Psoas muscle (tissue), 8 donors: ENCODE measurements at regions of chr4 and their contacts with region 1.

Region 1: GRCh38 chr4:153142700-153143438 is 61.4 kb upstream of the TRIM2 start:
- DNase-seq: peak; percentile 55 to 71
- ATAC-seq: peak; percentile 78 to 91 (median 84)
- H3K4me3 ChIP-seq: peak overlapping the region; percentile 6
- H3K27ac ChIP-seq: no peak overlapping the region
- H3K4me1 ChIP-seq: no peaks in the 10 kb centered on the region
- H3K27me3 ChIP-seq: no peaks in the 10 kb centered on the region
- CTCF ChIP-seq: peak; percentile 88

Region 2: GRCh38 chr4:153095448-153096204 is 47.2 kb before region 1 on chr4:
- intact Hi-C with region 1: no loop called
- DNase-seq: no peak
- ATAC-seq: peak in 1 of 4 donors; percentile 46
- H3K4me3 ChIP-seq: no peak overlapping the region
- H3K27ac ChIP-seq: no peak overlapping the region
- H3K4me1 ChIP-seq: no peaks in the 10 kb centered on the region
- H3K27me3 ChIP-seq: no peaks in the 10 kb centered on the region
- CTCF ChIP-seq: no peak

Region 3: DNA sequence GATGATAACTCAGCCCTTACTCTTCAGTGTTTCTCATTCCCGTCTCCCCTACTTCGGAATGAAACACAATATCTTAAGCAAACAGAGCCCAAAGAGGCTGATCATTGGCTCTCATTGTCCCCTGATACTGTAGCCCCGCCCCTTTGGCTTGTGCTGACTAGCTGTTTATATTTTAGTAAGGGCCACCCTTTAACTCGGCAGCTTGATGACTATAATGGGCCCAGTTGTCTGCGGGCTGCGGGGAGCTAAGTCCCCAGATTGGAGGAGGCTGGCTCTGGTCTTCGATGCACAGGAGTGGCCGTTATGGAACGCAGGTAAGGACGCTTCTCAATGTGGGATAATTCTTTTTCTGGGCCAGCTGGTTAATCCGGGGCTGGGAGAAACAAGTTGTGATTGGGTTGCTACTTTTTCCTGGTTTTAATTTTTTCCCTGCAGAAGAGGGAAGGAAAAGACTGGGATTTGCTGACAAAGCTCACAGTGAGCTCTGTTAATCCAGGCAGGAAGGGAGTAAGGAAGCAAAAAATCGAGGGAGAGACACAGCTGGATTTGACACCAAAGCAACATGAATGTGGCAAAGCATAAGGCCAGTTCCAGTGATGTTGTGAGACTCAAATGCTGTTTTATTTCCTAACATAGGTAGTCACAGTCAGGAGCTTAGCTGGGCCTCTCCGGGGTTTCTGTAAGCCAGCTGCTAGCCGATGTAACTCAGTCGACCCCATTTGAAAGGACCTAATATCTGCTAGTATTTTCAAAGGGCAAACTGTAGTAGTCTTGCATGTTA is 61.6 kb after region 1 on chr4 and contains the start of gene TRIM2:
- intact Hi-C with region 1: loop called in 1 of 2 experiments (anchors 5 kb)
- DNase-seq: peak; percentile 64 to 70
- ATAC-seq: peak; percentile 36 to 79 (median 65)
- H3K4me3 ChIP-seq: peak within 1 kb of the TSS; percentile 52
- H3K27ac ChIP-seq: no peak within 1 kb of the TSS
- H3K4me1 ChIP-seq: no peaks in the 10 kb centered on the region
- H3K27me3 ChIP-seq: no peaks in the 10 kb centered on the region
- CTCF ChIP-seq: no peak
- total RNA-seq, gene TRIM2: 3.9 to 7.1 (median 5.6) TPM

Region 4: GRCh38 chr4:153318696-153319320 is 175.9 kb after region 1 on chr4:
- intact Hi-C with region 1: loop called (anchors 2 kb)
- DNase-seq: no peak
- ATAC-seq: peak; percentile 57 to 83 (median 69)
- H3K4me3 ChIP-seq: no peak overlapping the region
- H3K27ac ChIP-seq: no peak overlapping the region
- H3K4me1 ChIP-seq: no peaks in the 10 kb centered on the region
- H3K27me3 ChIP-seq: no peaks in the 10 kb centered on the region
- CTCF ChIP-seq: peak; percentile 75

Region 5: DNA sequence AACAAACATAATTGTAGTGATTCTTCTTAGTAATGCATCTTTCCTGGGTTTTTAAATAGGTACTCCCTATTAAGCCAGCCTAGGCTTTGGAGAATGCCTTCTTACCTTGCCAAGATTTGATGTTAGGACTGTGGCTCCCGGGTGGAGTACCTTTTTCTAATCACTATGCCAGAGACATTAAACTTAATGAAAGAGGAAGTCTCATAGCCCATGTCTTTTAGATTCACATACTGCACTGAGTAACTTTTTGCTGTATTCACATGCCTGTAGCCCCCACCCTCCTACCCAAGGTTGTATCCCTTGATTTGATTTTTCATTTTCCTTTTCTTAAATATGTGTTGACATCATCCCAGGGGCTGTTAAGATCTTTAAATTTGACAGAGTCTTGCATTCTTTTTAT is 437.0 kb after region 1 on chr4:
- intact Hi-C with region 1: loop called in 1 of 2 experiments (anchors 5 kb)
- DNase-seq: no peak
- ATAC-seq: no peak
- H3K4me3 ChIP-seq: no peak overlapping the region
- H3K27ac ChIP-seq: no peak overlapping the region
- H3K4me1 ChIP-seq: peaks cover 3% of the 10 kb centered on the region
- H3K27me3 ChIP-seq: no peaks in the 10 kb centered on the region
- CTCF ChIP-seq: no peak

Region 6: GRCh38 chr4:153634738-153635353 is 492.0 kb after region 1 on chr4:
- intact Hi-C with region 1: loop called in 1 of 2 experiments (anchors 10 kb)
- DNase-seq: no peak
- ATAC-seq: peak in 2 of 4 donors; percentile 44 to 50
- H3K4me3 ChIP-seq: no peak overlapping the region
- H3K27ac ChIP-seq: no peak overlapping the region
- H3K4me1 ChIP-seq: no peaks in the 10 kb centered on the region
- H3K27me3 ChIP-seq: no peaks in the 10 kb centered on the region
- CTCF ChIP-seq: peak; percentile 63

Region 7: GRCh38 chr4:153750197-153750817 is 607.4 kb after region 1 on chr4:
- intact Hi-C with region 1: loop called in 1 of 2 experiments (anchors 5 kb)
- DNase-seq: no peak
- ATAC-seq: peak; percentile 44 to 70 (median 58)
- H3K4me3 ChIP-seq: no peak overlapping the region
- H3K27ac ChIP-seq: no peak overlapping the region
- H3K4me1 ChIP-seq: no peaks in the 10 kb centered on the region
- H3K27me3 ChIP-seq: no peaks in the 10 kb centered on the region
- CTCF ChIP-seq: peak; percentile 48